Mammary epithelial cell (primary cell): ENCODE measurements at regions of chr7 and their contacts with region 1.

Region 1: DNA sequence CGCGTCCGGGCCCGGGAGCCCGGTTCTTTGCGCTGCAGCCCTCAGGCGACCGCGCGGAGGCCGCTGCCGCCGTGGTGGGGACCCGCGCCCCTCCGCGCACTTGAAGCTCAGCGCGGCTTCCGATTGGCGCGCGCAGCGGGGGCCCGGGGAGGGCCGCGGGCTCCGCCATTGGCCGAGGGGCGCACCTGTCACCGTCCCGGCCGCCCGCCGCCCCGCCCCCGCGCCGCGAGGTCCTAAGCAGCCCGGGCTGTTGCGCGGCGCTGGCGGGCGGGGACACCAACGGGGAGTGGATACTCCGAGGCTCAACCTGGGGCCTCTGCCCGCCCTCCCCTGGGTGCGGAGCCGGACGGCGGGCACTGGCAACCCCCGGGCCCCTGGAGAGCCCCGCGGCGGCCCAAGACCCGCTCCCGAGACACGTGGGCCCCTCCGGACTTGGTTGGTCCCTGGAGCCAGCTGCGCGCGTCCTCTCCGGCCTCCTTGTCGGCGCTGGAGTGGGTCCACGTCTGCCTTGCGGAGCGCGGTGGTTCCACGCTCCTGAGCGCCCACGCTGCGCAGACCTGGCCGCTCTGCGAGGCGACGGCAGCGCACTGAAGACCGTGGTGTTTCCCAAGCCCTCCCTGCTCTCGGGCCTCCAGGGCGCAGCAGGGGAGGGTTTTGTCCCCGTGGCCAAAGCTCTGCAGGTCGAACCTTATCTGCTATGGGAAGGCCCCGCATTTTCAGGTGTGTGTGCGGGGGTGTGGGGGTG is at the start of gene MNX1:
- DNase-seq: peak; percentile 83
- H3K4me3 ChIP-seq: peak within 1 kb of the TSS; percentile 56 to 86 (median 64)
- H3K27ac ChIP-seq: no peak within 1 kb of the TSS
- H3K4me1 ChIP-seq: peaks cover 19% of the 10 kb centered on the region
- H3K27me3 ChIP-seq: no peaks in the 10 kb centered on the region
- CTCF ChIP-seq: no peak
- total RNA-seq, gene MNX1: 0.50 to 5.1 TPM

Region 2: GRCh38 chr7:157027568-157028198 is 16.9 kb after region 1 on chr7:
- CTCF ChIA-PET with region 1: no interaction called
- dilution Hi-C with region 1: no loop called
- in situ Hi-C with region 1: no loop called
- intact Hi-C with region 1: loop called (anchors 1 kb)
- DNase-seq: peak; percentile 98
- H3K4me3 ChIP-seq: no peak overlapping the region
- H3K27ac ChIP-seq: peak overlapping the region; percentile 26
- H3K4me1 ChIP-seq: peaks cover 12% of the 10 kb centered on the region
- H3K27me3 ChIP-seq: no peaks in the 10 kb centered on the region
- CTCF ChIP-seq: no peak